Colonic mucosa (tissue), 4 donors: ENCODE measurements at regions of chr4 and their contacts with region 1.

Region 1: DNA sequence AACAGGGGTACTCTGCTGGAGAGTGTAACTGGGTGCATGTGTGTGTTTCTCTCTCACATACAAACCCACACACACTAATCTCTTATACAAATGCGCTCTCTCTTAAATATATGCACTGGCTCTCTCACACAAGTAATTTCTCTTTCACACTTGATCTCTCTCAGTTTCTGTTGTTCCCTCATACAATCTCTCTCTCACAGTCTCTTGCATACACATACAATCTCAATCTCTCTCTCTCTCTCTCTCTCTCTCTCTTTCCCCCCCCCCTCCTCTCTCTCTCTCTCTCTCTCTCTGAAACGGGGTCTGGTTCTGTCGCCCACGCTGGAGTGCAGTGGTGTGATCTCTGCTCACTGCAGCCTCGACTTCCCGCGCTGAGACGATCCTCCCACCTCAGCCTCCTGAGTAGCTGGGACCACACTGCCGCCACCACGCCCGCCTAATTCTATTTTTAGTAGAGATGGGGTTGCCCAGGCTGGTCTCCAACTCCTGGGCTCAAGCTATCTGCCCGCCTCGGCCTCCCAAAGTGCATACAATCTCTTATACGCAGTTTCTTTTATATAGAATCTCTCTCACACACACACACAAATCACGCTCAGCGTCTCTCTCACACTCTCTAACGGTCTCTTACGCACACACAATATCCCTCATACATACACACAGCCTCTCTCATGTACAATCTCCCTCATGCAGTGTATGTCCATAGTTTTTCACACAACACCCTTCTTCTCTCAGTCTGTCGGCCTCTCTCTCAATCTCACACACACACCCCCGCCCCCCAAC is 518 bp upstream of the FAM241A start:
- DNase-seq: no peak
- H3K4me3 ChIP-seq: peak overlapping the region; percentile 79
- H3K27ac ChIP-seq: no peak overlapping the region
- H3K4me1 ChIP-seq: no peaks in the 10 kb centered on the region
- H3K27me3 ChIP-seq: no peaks in the 10 kb centered on the region
- CTCF ChIP-seq: no peak

Region 2: GRCh38 chr4:112109186-112110058 is 35.3 kb before region 1 on chr4:
- intact Hi-C with region 1: loop called (anchors 5 kb)
- DNase-seq: no peak
- H3K4me3 ChIP-seq: no peak overlapping the region
- H3K27ac ChIP-seq: peak overlapping the region; percentile 53
- H3K4me1 ChIP-seq: no peaks in the 10 kb centered on the region
- H3K27me3 ChIP-seq: no peaks in the 10 kb centered on the region
- CTCF ChIP-seq: no peak

Region 3: GRCh38 chr4:112523764-112524505 is 379.2 kb after region 1 on chr4:
- intact Hi-C with region 1: no loop called
- DNase-seq: peak; percentile 73
- H3K4me3 ChIP-seq: peak overlapping the region; percentile 27
- H3K27ac ChIP-seq: no peak overlapping the region
- H3K4me1 ChIP-seq: peaks cover 4% of the 10 kb centered on the region
- H3K27me3 ChIP-seq: peaks cover 46% of the 10 kb centered on the region
- CTCF ChIP-seq: peak; percentile 74